PC-9 (cell line): ENCODE measurements at regions of chr5 and their contacts with region 1.

Region 1: GRCh38 chr5:165630261-165630778 is 2124.9 kb downstream of the MAT2B start:
- DNase-seq: peak in 1 of 2 experiments; percentile 31
- H3K4me3 ChIP-seq: no peak overlapping the region
- H3K27ac ChIP-seq: no peak overlapping the region
- H3K4me1 ChIP-seq: no peaks in the 10 kb centered on the region
- H3K27me3 ChIP-seq: no peaks in the 10 kb centered on the region
- CTCF ChIP-seq: peak; percentile 88

Region 2: DNA sequence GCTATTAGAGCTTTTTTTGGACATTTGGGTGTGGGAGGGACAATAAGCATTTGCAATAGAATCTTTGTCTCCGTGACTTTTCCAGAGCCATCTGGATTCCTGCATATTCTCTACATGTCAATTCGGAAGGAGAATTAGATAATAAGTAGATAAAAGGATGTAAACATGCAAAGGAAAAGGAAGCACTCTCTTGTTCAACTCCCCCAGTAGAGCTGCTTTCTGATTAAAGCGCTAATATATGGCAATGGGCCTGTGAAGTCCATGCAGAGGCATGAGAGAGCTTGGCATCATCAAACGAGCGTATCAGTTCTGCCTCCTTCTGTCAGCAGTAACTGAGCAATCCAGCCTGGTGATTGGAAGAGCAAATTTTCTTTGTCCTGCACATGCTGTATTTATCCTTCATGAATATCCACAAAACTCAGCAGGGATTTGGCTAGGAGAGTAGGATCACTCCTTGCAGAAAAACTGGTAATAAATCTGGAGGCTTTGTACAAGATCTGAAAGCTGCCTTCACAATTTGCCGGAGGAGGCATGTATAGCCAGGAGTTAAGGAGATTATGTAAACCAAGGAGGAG is 372.0 kb before region 1 on chr5:
- CTCF ChIA-PET with region 1: no interaction called
- POLR2A ChIA-PET with region 1: no interaction called
- intact Hi-C with region 1: no loop called
- DNase-seq: no peak
- H3K4me3 ChIP-seq: no peak overlapping the region
- H3K27ac ChIP-seq: no peak overlapping the region
- H3K4me1 ChIP-seq: no peaks in the 10 kb centered on the region
- H3K27me3 ChIP-seq: no peaks in the 10 kb centered on the region
- CTCF ChIP-seq: no peak

Region 3: GRCh38 chr5:165573445-165573844 is 56.9 kb before region 1 on chr5:
- CTCF ChIA-PET with region 1: no interaction called
- POLR2A ChIA-PET with region 1: no interaction called
- intact Hi-C with region 1: no loop called
- DNase-seq: no peak
- H3K4me3 ChIP-seq: no peak overlapping the region
- H3K27ac ChIP-seq: no peak overlapping the region
- H3K4me1 ChIP-seq: no peaks in the 10 kb centered on the region
- H3K27me3 ChIP-seq: no peaks in the 10 kb centered on the region
- CTCF ChIP-seq: no peak

Region 4: GRCh38 chr5:165881259-165881658 is 250.9 kb after region 1 on chr5:
- CTCF ChIA-PET with region 1: no interaction called
- POLR2A ChIA-PET with region 1: no interaction called
- intact Hi-C with region 1: loop called (anchors 5 kb)
- DNase-seq: no peak
- H3K4me3 ChIP-seq: no peak overlapping the region
- H3K27ac ChIP-seq: no peak overlapping the region
- H3K4me1 ChIP-seq: no peaks in the 10 kb centered on the region
- H3K27me3 ChIP-seq: no peaks in the 10 kb centered on the region
- CTCF ChIP-seq: no peak; the same call in 1 of the 2 replicates

Region 5: DNA sequence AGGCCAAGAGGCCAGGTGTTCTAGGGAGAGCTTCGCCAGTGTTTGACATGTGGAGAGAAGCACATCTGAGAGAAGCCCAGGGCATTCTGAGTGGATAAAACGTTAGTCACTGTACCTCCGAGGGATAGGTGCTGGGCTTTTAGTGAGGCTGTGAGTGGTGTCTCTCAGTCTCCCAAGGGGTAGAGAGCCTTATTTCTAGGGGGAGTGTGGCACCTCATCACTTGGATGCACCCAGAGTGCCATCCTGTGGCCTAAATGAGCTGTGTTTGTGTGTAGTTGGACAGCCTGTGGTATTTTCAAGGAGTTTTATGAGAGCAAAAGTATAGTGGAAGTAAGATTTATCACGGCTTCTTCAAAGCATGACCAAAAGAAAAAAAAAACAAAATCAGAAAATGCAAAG is 1614.3 kb after region 1 on chr5:
- CTCF ChIA-PET with region 1: interaction called, 11 read pairs
- POLR2A ChIA-PET with region 1: no interaction called
- intact Hi-C with region 1: no loop called
- DNase-seq: peak in 1 of 2 experiments; percentile 6
- H3K4me3 ChIP-seq: no peak overlapping the region
- H3K27ac ChIP-seq: no peak overlapping the region
- H3K4me1 ChIP-seq: no peaks in the 10 kb centered on the region
- H3K27me3 ChIP-seq: 0 out of 2 replicates have a peak, but pooled peaks cover 4% of the 10 kb centered on the region
- CTCF ChIP-seq: no peak

Region 6: DNA sequence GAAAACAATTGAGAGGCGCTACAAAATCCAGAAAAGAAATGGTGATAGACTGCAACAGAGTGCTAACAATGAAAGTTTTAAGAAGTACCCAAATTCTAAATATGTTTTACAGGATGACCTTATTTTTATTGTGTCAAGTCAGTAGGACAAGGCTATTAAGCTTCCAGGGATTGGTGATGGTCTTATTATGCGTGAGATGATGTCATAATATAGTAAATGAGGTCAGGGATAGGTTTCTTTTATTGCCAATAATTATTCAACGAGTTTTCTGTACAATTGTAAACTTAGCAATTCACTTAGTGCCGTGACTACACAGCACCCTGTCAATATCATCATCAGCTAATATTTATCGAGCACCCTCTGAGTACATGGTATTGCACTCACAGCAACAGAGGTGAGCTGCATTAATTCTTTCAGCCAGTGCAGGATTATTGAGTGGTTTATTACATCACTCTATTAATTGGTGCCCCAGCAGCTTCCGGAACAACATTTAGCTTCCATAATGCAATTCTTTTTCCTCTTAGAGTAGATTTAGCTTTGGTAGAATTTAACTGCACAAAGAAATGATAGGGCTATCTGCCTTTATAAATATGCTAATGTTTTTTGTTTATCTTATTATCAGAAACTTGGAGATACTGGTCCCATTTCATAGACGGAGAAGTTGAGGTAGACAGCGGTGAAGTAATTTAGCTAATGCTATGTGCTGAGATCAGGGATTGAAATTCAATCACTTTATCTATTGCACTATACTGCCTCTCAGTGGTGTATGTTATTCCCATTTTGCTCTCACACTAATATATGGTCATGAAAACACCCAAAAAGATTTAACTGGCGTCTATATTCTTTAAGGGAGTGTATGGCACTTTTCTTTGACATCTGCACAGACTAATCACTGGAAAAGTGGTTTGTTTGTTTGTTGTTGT is 1935.0 kb after region 1 on chr5:
- CTCF ChIA-PET with region 1: no interaction called
- POLR2A ChIA-PET with region 1: no interaction called
- intact Hi-C with region 1: loop called (anchors 5 kb)
- DNase-seq: no peak
- H3K4me3 ChIP-seq: no peak overlapping the region
- H3K27ac ChIP-seq: no peak overlapping the region
- H3K4me1 ChIP-seq: no peaks in the 10 kb centered on the region
- H3K27me3 ChIP-seq: peaks cover 57% of the 10 kb centered on the region
- CTCF ChIP-seq: peak; percentile 52; the same call in 1 of the 2 replicates